Panc1 (cell line): ENCODE measurements at regions of chr9 and their contacts with region 1.

Region 1: GRCh38 chr9:90102292-90102901 is 497.6 kb downstream of the GADD45G start:
- DNase-seq: peak; percentile 59
- ATAC-seq: peak; percentile 96
- H3K4me3 ChIP-seq: no peak overlapping the region
- H3K27ac ChIP-seq: no peak overlapping the region
- H3K4me1 ChIP-seq: no peaks in the 10 kb centered on the region; the same call in 1 of the 2 replicates
- H3K27me3 ChIP-seq: no peaks in the 10 kb centered on the region
- CTCF ChIP-seq: peak; percentile 79

Region 2: GRCh38 chr9:89597711-89598625 is 504.4 kb before region 1 on chr9:
- CTCF ChIA-PET with region 1: interaction called, 14 read pairs
- POLR2A ChIA-PET with region 1: no interaction called
- in situ Hi-C with region 1: no loop called
- intact Hi-C with region 1: loop called (anchors 1 kb)
- DNase-seq: no peak
- ATAC-seq: peak; percentile 77
- H3K4me3 ChIP-seq: no peak overlapping the region
- H3K27ac ChIP-seq: no peak overlapping the region
- H3K4me1 ChIP-seq: no peaks in the 10 kb centered on the region
- H3K27me3 ChIP-seq: no peaks in the 10 kb centered on the region; the same call in 1 of the 2 replicates
- CTCF ChIP-seq: peak; percentile 82

Region 3: GRCh38 chr9:89999534-90000370 is 102.6 kb before region 1 on chr9:
- CTCF ChIA-PET with region 1: interaction called, 3 read pairs
- POLR2A ChIA-PET with region 1: no interaction called
- in situ Hi-C with region 1: no loop called
- intact Hi-C with region 1: loop called (anchors 5 kb)
- DNase-seq: no peak
- ATAC-seq: peak; percentile 86
- H3K4me3 ChIP-seq: peak overlapping the region in 1 of 2 experiments; percentile 41; a peak in 2 of 4 replicates
- H3K27ac ChIP-seq: peak overlapping the region; percentile 69
- H3K4me1 ChIP-seq: peaks cover 18% of the 10 kb centered on the region
- H3K27me3 ChIP-seq: no peaks in the 10 kb centered on the region
- CTCF ChIP-seq: no peak

Region 4: GRCh38 chr9:90156315-90156714 is 53.9 kb after region 1 on chr9:
- CTCF ChIA-PET with region 1: no interaction called
- POLR2A ChIA-PET with region 1: no interaction called
- in situ Hi-C with region 1: no loop called
- intact Hi-C with region 1: no loop called
- DNase-seq: no peak
- ATAC-seq: no peak
- H3K4me3 ChIP-seq: no peak overlapping the region
- H3K27ac ChIP-seq: no peak overlapping the region
- H3K4me1 ChIP-seq: no peaks in the 10 kb centered on the region
- H3K27me3 ChIP-seq: no peaks in the 10 kb centered on the region; the same call in 1 of the 2 replicates
- CTCF ChIP-seq: no peak

Region 5: DNA sequence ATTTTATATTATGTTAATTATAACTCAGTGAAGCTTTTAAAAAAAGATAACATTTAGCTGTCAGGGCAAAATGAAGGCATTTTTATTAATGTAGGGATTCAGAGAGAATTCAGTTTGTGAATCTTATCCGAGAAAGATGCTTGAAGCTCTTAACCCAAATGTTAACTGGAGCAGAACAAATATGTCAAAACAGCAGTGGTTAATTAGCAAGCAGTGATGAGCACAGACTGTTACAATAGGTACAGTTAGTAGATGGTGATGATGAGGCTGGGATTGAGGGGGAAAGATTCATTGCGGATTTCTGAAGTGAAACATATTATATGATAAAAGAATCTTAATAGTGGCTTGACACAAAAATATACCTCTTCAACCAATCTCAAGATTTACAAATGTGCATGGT is 183.5 kb after region 1 on chr9:
- CTCF ChIA-PET with region 1: no interaction called
- POLR2A ChIA-PET with region 1: no interaction called
- in situ Hi-C with region 1: no loop called
- intact Hi-C with region 1: no loop called
- DNase-seq: no peak
- ATAC-seq: no peak
- H3K4me3 ChIP-seq: no peak overlapping the region
- H3K27ac ChIP-seq: no peak overlapping the region
- H3K4me1 ChIP-seq: no peaks in the 10 kb centered on the region
- H3K27me3 ChIP-seq: no peaks in the 10 kb centered on the region
- CTCF ChIP-seq: no peak